ENCODE measurements at regions of chr16 and their contacts with region 1.

Region 1: GRCh38 chr16:74709441-74709877 is 8.8 kb upstream of the MLKL start:
- DNase-seq: peak; percentile 91
- H3K4me3 Mint-ChIP-seq: no peak overlapping the region
- H3K27ac Mint-ChIP-seq: no peak overlapping the region
- H3K4me1 Mint-ChIP-seq: peaks cover 5% of the 10 kb centered on the region
- H3K27me3 Mint-ChIP-seq: no peaks in the 10 kb centered on the region

Region 2: GRCh38 chr16:74726716-74727115 is 17.3 kb after region 1 on chr16:
- CTCF ChIA-PET with region 1: interaction called, 34 read pairs
- intact Hi-C with region 1: loop called (anchors 1 kb)
- DNase-seq: peak; percentile 71
- H3K4me3 Mint-ChIP-seq: no peak overlapping the region
- H3K27ac Mint-ChIP-seq: no peak overlapping the region
- H3K4me1 Mint-ChIP-seq: peaks cover 7% of the 10 kb centered on the region
- H3K27me3 Mint-ChIP-seq: no peaks in the 10 kb centered on the region

Region 3: DNA sequence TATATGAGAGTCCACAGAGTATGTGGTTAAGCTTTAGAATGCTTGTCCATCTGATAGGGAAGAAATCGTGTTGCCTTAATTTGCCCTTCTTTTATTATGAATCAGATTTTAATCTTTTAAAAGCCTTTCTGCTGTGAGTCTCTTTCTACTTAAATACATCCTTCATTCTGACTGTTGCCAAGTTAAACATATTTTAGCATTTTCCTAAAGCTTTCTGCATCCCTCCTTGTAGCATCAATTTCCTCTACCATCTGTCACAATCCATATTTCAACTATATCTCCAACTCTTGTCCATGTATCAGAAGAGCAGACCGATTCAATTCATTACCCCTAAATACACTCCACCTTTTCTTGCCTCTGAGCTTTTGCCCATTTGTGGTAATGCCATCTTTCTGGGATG is 85.6 kb after region 1 on chr16:
- CTCF ChIA-PET with region 1: no interaction called
- intact Hi-C with region 1: no loop called
- DNase-seq: no peak
- H3K4me3 Mint-ChIP-seq: no peak overlapping the region
- H3K27ac Mint-ChIP-seq: no peak overlapping the region
- H3K4me1 Mint-ChIP-seq: no peaks in the 10 kb centered on the region
- H3K27me3 Mint-ChIP-seq: peaks cover 9% of the 10 kb centered on the region

Region 4: DNA sequence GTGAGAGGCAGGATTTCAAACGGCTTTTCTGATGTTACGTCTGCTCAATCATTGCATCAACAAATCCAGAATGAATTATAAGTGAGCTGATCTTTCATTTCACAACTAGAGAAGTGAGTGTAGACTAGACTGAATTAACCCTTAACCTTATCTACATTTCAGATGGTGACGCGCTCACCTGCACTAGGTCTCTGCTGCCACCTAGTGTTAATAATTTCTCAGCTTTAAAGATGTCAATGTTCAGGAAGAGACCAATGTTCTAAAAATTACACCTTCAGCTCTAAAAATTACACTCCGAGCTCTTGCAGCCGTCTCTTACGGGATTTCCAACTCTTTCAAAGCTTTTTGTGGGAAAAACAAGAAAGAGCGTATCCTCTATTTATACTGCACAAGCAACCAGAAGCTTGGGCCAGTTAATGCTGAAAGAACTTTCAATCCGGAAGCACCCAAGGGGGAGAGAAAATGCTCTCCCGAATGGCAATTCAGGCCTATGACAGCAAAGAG is 153.3 kb after region 1 on chr16:
- CTCF ChIA-PET with region 1: interaction called, 58 read pairs
- intact Hi-C with region 1: loop called (anchors 1 kb)
- DNase-seq: peak; percentile 42
- H3K4me3 Mint-ChIP-seq: no peak overlapping the region
- H3K27ac Mint-ChIP-seq: no peak overlapping the region
- H3K4me1 Mint-ChIP-seq: peaks cover 8% of the 10 kb centered on the region
- H3K27me3 Mint-ChIP-seq: no peaks in the 10 kb centered on the region

Region 5: GRCh38 chr16:75148311-75149195 is 439.1 kb after region 1 on chr16 and contains the start of gene ZFP1:
- CTCF ChIA-PET with region 1: no interaction called
- intact Hi-C with region 1: loop called (anchors 10 kb)
- DNase-seq: peak; percentile 97
- H3K4me3 Mint-ChIP-seq: peak within 1 kb of the TSS; percentile 80
- H3K27ac Mint-ChIP-seq: peak within 1 kb of the TSS; percentile 73
- H3K4me1 Mint-ChIP-seq: peaks cover 37% of the 10 kb centered on the region
- H3K27me3 Mint-ChIP-seq: no peaks in the 10 kb centered on the region
- total RNA-seq, gene ZFP1: 20.2 to 20.9 TPM

Region 6: GRCh38 chr16:75402821-75403475 is 693.5 kb after region 1 on chr16:
- CTCF ChIA-PET with region 1: no interaction called
- intact Hi-C with region 1: loop called (anchors 5 kb)
- DNase-seq: no peak
- H3K4me3 Mint-ChIP-seq: no peak overlapping the region
- H3K27ac Mint-ChIP-seq: no peak overlapping the region
- H3K4me1 Mint-ChIP-seq: peaks cover 27% of the 10 kb centered on the region
- H3K27me3 Mint-ChIP-seq: no peaks in the 10 kb centered on the region